Dendritic cell treated with granulocyte-macrophage colony-stimulating factor and Interleukin-4, amounts not matched to agents 40 ng/mL and 50 ng/mL, for 4 days (primary cell): ENCODE measurements at regions of chr9 and their contacts with region 1.

Region 1: GRCh38 chr9:86354011-86354817 is at the start of gene TUT7:
- H3K4me3 Mint-ChIP-seq: peak within 1 kb of the TSS; percentile 98
- H3K27ac Mint-ChIP-seq: peak within 1 kb of the TSS; percentile 99
- H3K4me1 Mint-ChIP-seq: peaks cover 35% of the 10 kb centered on the region
- H3K27me3 Mint-ChIP-seq: no peaks in the 10 kb centered on the region

Region 2: GRCh38 chr9:86303316-86303975 is 50.8 kb before region 1 on chr9:
- intact Hi-C with region 1: no loop called
- H3K4me3 Mint-ChIP-seq: no peak overlapping the region
- H3K27ac Mint-ChIP-seq: no peak overlapping the region
- H3K4me1 Mint-ChIP-seq: peaks cover 7% of the 10 kb centered on the region
- H3K27me3 Mint-ChIP-seq: no peaks in the 10 kb centered on the region

Region 3: DNA sequence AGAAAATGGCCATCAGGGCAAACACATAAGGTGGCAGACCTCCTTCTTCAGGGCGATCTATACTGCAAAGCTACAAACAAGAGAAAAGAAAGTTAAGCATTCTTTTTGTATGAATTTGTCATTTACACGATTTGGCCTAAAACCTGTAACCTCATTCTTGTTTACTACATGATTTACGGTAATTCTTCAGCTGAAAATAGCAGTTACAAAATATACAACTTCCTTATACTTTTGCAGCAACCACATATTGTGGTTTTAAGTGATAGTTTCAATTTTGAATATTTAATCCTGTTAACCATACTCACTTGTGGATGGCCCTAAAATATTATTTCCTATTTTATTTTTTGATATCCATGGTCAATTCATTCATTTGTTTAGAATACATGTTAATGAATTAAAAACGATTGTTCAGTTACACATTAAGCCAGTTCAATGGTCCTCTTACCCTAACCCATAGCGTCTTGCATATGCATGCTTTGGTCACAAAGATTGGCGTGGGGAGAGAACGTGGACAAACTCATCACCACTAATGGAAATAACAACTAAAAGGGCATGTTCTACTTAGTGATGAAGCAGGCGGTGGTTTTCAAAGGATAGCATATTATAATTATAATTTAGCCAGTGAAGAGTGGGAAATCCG is 16.6 kb before region 1 on chr9:
- intact Hi-C with region 1: loop called (anchors 2 kb)
- H3K4me3 Mint-ChIP-seq: no peak overlapping the region
- H3K27ac Mint-ChIP-seq: peak overlapping the region; percentile 41
- H3K4me1 Mint-ChIP-seq: peaks cover 20% of the 10 kb centered on the region
- H3K27me3 Mint-ChIP-seq: no peaks in the 10 kb centered on the region

Region 4: DNA sequence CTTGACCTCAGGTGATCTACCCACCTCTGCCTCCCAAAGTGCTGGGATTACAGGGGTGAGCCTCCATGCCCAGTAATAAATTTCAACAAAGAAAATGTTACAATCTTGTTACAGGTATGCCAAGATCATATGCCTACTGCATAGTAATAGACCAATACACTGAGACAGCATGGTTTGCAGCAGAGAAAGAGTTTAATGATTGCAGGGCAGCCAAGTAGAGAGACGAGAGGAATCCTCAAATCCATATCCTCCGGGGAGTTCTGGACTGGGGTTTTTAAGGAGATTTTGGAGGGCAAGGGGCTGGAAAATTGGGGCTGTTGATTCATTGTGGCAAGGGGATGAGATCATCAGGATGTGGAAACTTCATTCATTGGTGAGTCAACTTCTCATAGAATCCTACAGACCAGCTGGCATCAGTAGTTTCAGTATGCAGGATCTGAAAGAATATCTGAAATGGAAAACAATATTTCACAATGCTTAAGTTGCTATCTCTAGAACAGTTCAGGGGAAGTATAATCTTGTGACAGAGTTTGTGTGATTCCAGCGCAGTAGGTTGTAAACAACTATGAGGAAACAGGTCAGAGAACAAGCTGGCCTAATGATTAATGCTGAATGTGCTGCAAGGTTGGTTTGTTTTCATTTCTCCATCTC is 14.8 kb after region 1 on chr9:
- intact Hi-C with region 1: loop called (anchors 2 kb)
- H3K4me3 Mint-ChIP-seq: no peak overlapping the region
- H3K27ac Mint-ChIP-seq: peak overlapping the region; percentile 92
- H3K4me1 Mint-ChIP-seq: peaks cover 42% of the 10 kb centered on the region
- H3K27me3 Mint-ChIP-seq: peaks cover 16% of the 10 kb centered on the region